ENCODE measurements at regions of chr12 and their contacts with region 1.

Region 1: GRCh38 chr12:82527165-82527780 is 159.4 kb upstream of the TMTC2 start:
- DNase-seq: peak; percentile 12
- H3K4me3 ChIP-seq: no peak overlapping the region
- H3K27ac ChIP-seq: no peak overlapping the region
- H3K4me1 ChIP-seq: peaks cover 0 to 13% (median 0%) of the 10 kb centered on the region in 4 donors
- H3K27me3 ChIP-seq: no peaks in the 10 kb centered on the region
- CTCF ChIP-seq: peak; percentile 77 to 85 (median 79)
- EP300 ChIP-seq: no peak
- POLR2A ChIP-seq: no peak

Region 2: DNA sequence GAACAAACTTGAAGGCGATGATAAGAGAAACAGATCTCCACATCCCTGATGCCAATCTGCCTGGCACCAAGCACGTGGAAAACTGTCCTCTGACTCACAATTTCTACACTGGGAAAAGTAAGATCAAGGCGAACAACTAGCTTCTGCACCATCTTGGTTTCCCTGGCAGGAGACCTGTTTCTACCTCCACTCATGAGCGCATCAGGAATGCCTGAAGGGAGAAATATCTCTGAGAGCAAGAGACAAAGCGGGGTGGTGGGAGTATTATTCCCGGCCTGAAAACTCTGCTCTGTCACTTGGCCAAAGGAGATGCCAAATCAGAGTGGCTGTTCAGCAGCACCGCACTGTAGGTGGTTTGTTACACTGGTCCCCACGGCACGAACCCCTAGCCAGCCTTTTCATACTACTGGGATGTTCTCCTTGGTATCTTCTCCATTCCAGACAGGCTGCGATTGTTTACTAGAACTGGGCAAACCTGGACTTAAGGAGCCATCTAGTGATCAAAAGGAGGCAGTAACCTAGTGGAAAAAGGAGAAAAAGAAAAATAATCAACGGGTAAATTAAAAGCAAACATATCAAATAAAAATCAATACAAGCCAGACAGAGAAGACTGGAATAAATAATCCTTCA is 100.4 kb after region 1 on chr12:
- in situ Hi-C with region 1: loop called in 1 of 4 experiments (anchors 10 kb)
- intact Hi-C with region 1: no loop called
- DNase-seq: no peak
- H3K4me3 ChIP-seq: no peak overlapping the region
- H3K27ac ChIP-seq: no peak overlapping the region
- H3K4me1 ChIP-seq: no peaks in the 10 kb centered on the region
- H3K27me3 ChIP-seq: no peaks in the 10 kb centered on the region
- CTCF ChIP-seq: peak; percentile 25 to 66 (median 34)
- EP300 ChIP-seq: no peak
- POLR2A ChIP-seq: no peak

Region 3: GRCh38 chr12:82964446-82964845 is 437.2 kb after region 1 on chr12:
- in situ Hi-C with region 1: no loop called
- intact Hi-C with region 1: loop called (anchors 5 kb)
- DNase-seq: no peak
- H3K4me3 ChIP-seq: no peak overlapping the region
- H3K27ac ChIP-seq: no peak overlapping the region
- H3K4me1 ChIP-seq: no peaks in the 10 kb centered on the region
- H3K27me3 ChIP-seq: no peaks in the 10 kb centered on the region
- CTCF ChIP-seq: no peak
- EP300 ChIP-seq: no peak
- POLR2A ChIP-seq: no peak